K562 (cell line): ENCODE measurements at regions of chr16 and their contacts with region 1.

Region 1: GRCh38 chr16:74862741-74863244 is 88.2 kb upstream of the FA2H start:
- DNase-seq: peak; percentile 64 to 73 (median 71)
- ATAC-seq: peak; percentile 89
- H3K4me3 ChIP-seq: no peak overlapping the region
- H3K27ac ChIP-seq: no peak overlapping the region
- H3K4me1 ChIP-seq: no peaks in the 10 kb centered on the region
- H3K27me3 ChIP-seq: peaks cover 4 to 9% of the 10 kb centered on the region in 2 experiments; a peak in 4 of 5 replicates
- CTCF ChIP-seq: peak; percentile 69 to 96 (median 77)
- EP300 ChIP-seq: no peak
- POLR2A ChIP-seq: no peak
- RAD21 ChIP-seq: peak; percentile 89 to 93

Region 2: DNA sequence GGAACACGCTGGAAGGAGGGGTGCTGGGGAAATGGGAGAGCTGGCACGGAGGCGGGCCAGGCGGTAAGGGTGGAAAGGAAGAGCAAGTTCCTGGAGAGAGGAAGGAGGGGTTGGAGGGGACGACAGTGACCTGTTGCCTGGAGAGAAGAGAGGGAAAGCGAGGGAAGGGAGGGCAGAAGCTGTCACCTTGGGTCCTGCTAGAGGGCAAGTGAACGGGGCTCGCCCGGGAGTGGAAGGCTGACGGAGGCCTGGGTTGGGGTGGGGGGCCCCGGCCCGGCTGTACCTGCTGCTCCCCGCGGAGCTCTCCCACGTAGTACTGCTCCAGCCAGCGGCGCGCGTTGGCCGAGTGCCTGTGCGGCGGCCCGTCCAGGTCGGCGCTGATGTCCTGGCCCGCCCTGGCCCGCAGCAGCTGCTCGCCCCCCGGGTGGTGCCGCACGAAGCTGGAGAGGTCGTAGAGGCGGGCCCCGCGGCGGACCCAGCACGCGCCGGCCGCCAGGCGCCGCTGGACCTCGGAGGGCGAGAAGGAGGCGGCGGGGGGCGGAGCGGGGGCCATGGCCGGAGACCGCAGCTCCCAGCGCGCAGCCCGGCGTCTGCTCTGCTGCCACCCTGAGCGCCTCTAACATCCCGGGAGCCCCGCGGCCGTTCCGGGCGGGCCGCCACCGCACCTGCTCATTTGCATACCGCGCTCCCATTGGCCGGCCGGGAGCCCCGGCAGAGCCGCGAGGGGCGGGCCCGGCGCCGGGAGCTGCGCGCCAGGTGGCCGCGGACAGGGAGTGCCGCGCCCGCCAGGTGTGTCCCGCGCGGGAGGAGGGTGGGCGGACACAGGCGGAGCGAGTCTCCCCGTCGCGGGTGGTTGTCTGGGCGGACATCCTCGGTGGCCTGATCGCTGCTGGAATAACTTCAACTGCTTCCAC is 88.3 kb before region 1 on chr16 and contains the start of gene FA2H:
- CTCF ChIA-PET with region 1: no interaction called
- POLR2A ChIA-PET with region 1: no interaction called
- in situ Hi-C with region 1: no loop called
- intact Hi-C with region 1: loop called (anchors 5 kb)
- DNase-seq: peak; percentile 84 to 97 (median 96)
- ATAC-seq: peak; percentile 100
- H3K4me3 ChIP-seq: peak within 1 kb of the TSS; percentile 29
- H3K27ac ChIP-seq: no peak within 1 kb of the TSS
- H3K4me1 ChIP-seq: peaks cover 0 to 12% of the 10 kb centered on the region in 2 experiments; a peak in 4 of 5 replicates
- H3K27me3 ChIP-seq: peaks cover 29 to 55% of the 10 kb centered on the region in 2 experiments
- CTCF ChIP-seq: peak; percentile 8 to 49 (median 15); a peak in 2 of 6 replicates
- EP300 ChIP-seq: no peak
- POLR2A ChIP-seq: no peak
- RAD21 ChIP-seq: no peak
- polyA plus RNA-seq, gene FA2H: not detected

Region 3: DNA sequence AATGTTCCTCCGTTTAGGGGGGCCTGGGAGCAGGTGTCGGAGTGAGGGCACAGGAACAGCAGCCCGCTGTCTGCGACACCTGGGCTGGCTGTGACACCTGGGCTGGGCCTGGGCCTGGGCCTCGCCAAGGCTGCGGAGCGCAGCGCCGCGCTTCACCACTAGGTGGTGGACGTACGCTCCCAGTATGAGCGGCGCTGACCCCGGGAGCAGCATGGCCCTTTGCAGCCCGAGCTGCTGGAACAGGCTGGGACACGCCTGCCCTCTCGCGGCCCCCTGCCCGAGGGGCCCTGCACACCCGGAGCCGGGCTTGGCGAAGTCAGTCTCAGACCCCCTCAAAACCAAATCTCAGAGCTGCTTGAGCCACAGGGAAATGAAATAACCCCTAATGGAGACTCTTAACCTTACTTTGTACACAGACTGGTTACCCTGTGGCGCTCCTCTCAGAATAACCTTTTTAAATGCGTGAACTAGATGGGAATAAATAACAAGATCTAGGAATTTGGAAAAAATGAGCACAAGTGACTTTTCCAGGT is 49.6 kb before region 1 on chr16:
- CTCF ChIA-PET with region 1: interaction called, 24 read pairs
- POLR2A ChIA-PET with region 1: interaction called, 4 read pairs
- in situ Hi-C with region 1: no loop called
- intact Hi-C with region 1: loop called (anchors 1 kb)
- DNase-seq: peak; percentile 83 to 88 (median 86)
- ATAC-seq: peak; percentile 100
- H3K4me3 ChIP-seq: no peak overlapping the region
- H3K27ac ChIP-seq: no peak overlapping the region
- H3K4me1 ChIP-seq: peaks cover 0 to 6% of the 10 kb centered on the region in 2 experiments; a peak in 2 of 5 replicates
- H3K27me3 ChIP-seq: peaks cover 5 to 35% of the 10 kb centered on the region in 2 experiments; a peak in 4 of 5 replicates
- CTCF ChIP-seq: peak; percentile 96 to 99 (median 97)
- EP300 ChIP-seq: no peak
- POLR2A ChIP-seq: no peak
- RAD21 ChIP-seq: peak; percentile 88 to 97

Region 4: DNA sequence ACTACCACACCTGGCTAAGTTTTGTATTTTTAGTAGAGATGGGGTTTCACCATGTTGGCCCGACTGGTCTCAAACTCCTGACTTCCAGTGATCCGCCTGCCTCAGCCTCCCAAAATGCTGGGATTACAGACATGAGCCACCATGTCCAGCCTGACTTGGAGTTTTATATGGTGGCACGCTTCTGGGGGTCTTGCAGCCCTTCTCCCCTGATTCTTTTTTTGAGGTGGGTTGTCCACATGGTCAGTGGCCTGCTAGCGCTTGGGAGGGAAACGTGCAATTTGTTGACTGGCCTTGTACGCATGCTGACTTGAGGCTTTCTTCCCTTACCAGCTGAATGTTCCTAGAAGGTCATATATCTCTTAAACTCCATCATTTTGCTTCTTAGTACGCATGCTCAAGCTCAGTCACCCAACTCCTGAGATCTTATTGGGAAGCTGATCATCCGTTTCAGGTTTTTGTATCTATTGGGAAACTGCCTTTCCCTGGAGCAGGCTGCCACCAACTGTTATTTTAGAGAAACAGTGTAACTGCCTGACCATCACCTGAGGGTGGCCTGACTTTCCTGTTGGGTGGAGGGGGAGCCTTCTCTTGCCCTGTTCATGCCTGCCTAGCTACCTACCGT is 267.5 kb after region 1 on chr16:
- CTCF ChIA-PET with region 1: no interaction called
- POLR2A ChIA-PET with region 1: no interaction called
- in situ Hi-C with region 1: no loop called
- intact Hi-C with region 1: loop called (anchors 10 kb)
- DNase-seq: peak in 1 of 4 experiments; percentile 58
- ATAC-seq: peak; percentile 89
- H3K4me3 ChIP-seq: no peak overlapping the region
- H3K27ac ChIP-seq: no peak overlapping the region
- H3K4me1 ChIP-seq: peaks cover 4 to 7% of the 10 kb centered on the region in 2 experiments; a peak in 4 of 5 replicates
- H3K27me3 ChIP-seq: no peaks in the 10 kb centered on the region; a peak in 1 of 5 replicates
- CTCF ChIP-seq: peak; percentile 44 to 63 (median 45); a peak in 5 of 6 replicates
- EP300 ChIP-seq: no peak; the same call in 1 of the 2 replicates
- POLR2A ChIP-seq: no peak
- RAD21 ChIP-seq: peak; percentile 44 to 78; a peak in 3 of 4 replicates